ENCODE measurements at regions of chr5 and their contacts with region 1.

Region 1: DNA sequence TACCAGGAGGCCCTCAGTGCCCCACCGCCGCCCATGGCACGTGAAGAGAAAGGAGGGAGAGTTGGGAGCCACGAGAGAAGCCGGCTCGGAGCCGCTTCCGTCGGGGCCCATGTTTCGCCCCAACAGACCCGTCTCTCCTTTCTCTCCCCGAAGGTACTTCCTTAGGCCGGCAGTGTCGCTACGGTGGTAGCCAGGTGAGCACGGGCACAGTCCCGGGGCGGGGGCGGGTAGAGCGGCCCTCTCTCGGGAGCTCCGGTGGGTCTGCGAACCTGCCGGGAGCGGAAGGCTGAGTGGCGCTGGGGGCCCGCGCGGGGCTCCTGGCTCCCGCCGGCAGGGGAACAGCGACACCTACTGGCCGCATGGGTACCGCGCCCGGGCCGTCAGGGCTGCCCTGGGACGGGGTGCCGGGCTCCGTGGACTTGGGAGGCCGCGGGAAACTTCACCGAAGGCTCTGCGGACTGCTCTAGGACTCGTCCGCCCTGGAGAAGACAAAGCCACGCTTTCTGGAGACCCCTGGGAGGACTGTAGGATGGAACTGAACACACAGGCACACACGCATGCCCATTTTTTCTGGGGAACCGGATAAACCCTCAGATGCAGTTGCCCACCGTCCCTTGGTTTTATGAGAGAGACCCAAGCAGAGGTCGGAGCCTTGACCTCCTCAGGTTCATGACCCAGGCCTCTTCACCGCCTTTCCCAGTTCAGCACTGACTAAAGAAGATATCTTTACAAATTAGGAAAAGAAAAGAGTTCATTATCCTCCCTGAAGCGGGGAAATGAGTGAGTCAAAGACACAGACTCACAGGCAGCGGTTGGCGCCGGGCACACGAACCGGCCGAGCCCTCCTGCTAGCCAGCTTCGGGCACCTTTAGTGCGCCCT is 202.5 kb downstream of the MEF2C start:
- DNase-seq: peak; percentile 80
- ATAC-seq: peak; percentile 93

Region 2: GRCh38 chr5:87780831-87781760 is 899.4 kb before region 1 on chr5:
- intact Hi-C with region 1: loop called (anchors 5 kb)
- DNase-seq: peak; percentile 68
- ATAC-seq: peak; percentile 94

Region 3: GRCh38 chr5:88130211-88130815 is 550.2 kb before region 1 on chr5:
- intact Hi-C with region 1: loop called (anchors 10 kb)
- DNase-seq: no peak
- ATAC-seq: no peak

Region 4: GRCh38 chr5:88555674-88556073 is 124.8 kb before region 1 on chr5:
- intact Hi-C with region 1: no loop called
- DNase-seq: no peak
- ATAC-seq: no peak